Dendritic cell treated with granulocyte-macrophage colony-stimulating factor and Interleukin-4, amounts not matched to agents 40 ng/mL and 50 ng/mL, for 4 days (primary cell): ENCODE measurements at regions of chr13 and their contacts with region 1.

Region 1: DNA sequence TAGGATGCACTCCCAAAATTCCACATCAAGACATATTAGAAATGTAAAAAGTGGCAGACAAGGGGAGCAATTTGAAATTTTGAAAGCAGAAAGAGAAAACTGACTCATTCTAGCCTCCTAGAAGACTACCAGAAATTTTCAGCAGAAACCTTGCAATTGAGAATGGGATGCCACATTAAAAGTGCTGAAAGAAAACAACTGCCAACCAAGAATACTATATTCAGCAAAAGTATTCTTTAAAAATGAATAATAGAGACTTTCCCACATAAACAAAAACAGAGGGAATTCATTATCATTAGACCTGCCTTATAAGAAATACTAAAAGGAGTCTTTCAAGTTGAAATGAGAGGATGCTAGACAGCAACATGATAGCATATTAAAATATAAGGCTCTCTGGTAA is 78.3 kb upstream of the HTR2A start:
- H3K4me3 Mint-ChIP-seq: no peak overlapping the region
- H3K27ac Mint-ChIP-seq: no peak overlapping the region
- H3K4me1 Mint-ChIP-seq: no peaks in the 10 kb centered on the region
- H3K27me3 Mint-ChIP-seq: peaks cover 4% of the 10 kb centered on the region

Region 2: DNA sequence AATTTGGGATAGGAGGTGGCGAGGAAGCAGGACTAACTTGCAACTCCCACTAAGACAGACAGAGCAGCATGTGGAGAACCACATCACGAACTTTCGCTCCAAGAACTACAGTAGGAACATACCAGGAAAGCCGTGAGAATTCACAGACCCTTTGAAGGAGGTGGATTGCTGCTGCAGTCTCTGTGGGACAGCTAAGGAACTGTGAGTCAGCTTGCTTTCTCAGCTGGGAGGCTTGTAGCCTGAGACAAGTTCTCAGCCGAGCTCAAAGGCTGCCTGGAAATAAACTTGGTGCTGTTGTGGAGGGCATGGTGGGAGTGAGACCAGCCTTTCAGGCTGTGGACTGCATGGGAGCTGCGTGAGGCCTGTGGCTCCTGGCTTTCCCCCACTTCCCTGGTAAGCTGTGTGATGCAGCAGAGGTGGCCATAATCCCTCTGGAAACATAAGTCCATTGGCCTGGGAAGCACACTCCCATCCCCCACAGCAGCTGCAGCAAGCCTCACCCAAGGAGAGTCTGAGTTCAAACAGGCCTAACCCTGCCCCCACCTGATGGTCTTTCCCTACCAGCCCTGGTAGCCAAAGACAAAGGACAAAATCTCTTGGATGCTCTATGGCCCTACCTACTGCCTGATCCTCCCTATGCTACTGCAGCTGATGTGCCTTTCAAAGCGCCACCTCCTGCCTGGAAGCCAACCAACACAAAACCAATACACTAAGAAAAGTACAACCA is 362.8 kb after region 1 on chr13:
- intact Hi-C with region 1: no loop called
- H3K4me3 Mint-ChIP-seq: no peak overlapping the region
- H3K27ac Mint-ChIP-seq: no peak overlapping the region
- H3K4me1 Mint-ChIP-seq: no peaks in the 10 kb centered on the region
- H3K27me3 Mint-ChIP-seq: no peaks in the 10 kb centered on the region

Region 3: GRCh38 chr13:47598340-47598911 is 623.3 kb after region 1 on chr13:
- intact Hi-C with region 1: loop called (anchors 5 kb)
- H3K4me3 Mint-ChIP-seq: no peak overlapping the region
- H3K27ac Mint-ChIP-seq: no peak overlapping the region
- H3K4me1 Mint-ChIP-seq: no peaks in the 10 kb centered on the region
- H3K27me3 Mint-ChIP-seq: no peaks in the 10 kb centered on the region

Region 4: GRCh38 chr13:47774671-47774994 is 799.5 kb after region 1 on chr13:
- intact Hi-C with region 1: loop called (anchors 1 kb)
- H3K4me3 Mint-ChIP-seq: no peak overlapping the region
- H3K27ac Mint-ChIP-seq: no peak overlapping the region
- H3K4me1 Mint-ChIP-seq: no peaks in the 10 kb centered on the region
- H3K27me3 Mint-ChIP-seq: peaks cover 3% of the 10 kb centered on the region